ENCODE measurements at regions of chr4 and their contacts with region 1.

Region 1: GRCh38 chr4:26093551-26093950 is 179.5 kb downstream of the SMIM20 start:
- DNase-seq: no peak
- H3K4me3 ChIP-seq: no peak overlapping the region
- H3K27ac ChIP-seq: no peak overlapping the region
- H3K4me1 ChIP-seq: no peaks in the 10 kb centered on the region
- H3K27me3 ChIP-seq: no peaks in the 10 kb centered on the region
- CTCF ChIP-seq: no peak
- EP300 ChIP-seq: no peak
- POLR2A ChIP-seq: no peak

Region 2: GRCh38 chr4:24924309-24924781 is 1169.2 kb before region 1 on chr4:
- in situ Hi-C with region 1: no loop called
- intact Hi-C with region 1: no loop called
- DNase-seq: no peak
- H3K4me3 ChIP-seq: no peak overlapping the region
- H3K27ac ChIP-seq: no peak overlapping the region
- H3K4me1 ChIP-seq: peaks cover 0 to 5% (median 0%) of the 10 kb centered on the region in 4 donors
- H3K27me3 ChIP-seq: peaks cover 5% of the 10 kb centered on the region
- CTCF ChIP-seq: no peak
- EP300 ChIP-seq: no peak
- POLR2A ChIP-seq: no peak

Region 3: DNA sequence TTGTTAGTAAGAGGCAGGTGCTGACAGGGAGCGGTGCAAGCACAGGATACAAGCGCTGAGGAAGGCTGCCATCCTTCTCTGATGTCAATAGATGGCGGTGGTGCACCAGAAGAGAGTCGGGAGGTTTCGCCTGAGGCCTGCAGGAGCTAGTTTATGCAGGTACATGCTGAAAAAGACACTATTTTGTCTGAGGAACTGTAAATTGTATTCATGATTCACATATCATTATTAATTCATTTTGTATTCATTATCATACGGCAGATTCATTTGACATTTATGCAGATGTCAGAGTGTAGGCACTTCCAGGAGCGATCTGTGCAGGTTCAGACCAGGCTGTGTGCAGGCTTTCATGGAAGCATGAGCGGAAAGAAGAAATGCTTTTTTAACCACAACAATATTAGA is 1591.1 kb after region 1 on chr4:
- in situ Hi-C with region 1: no loop called
- intact Hi-C with region 1: loop called (anchors 10 kb)
- DNase-seq: peak; percentile 13
- H3K4me3 ChIP-seq: no peak overlapping the region
- H3K27ac ChIP-seq: no peak overlapping the region
- H3K4me1 ChIP-seq: no peaks in the 10 kb centered on the region
- H3K27me3 ChIP-seq: no peaks in the 10 kb centered on the region
- CTCF ChIP-seq: peak; percentile 23 to 68 (median 52)
- EP300 ChIP-seq: no peak
- POLR2A ChIP-seq: no peak

Measured in transverse colon (tissue), 4 donors.